Panc1 (cell line): ENCODE measurements at regions of chr13 and their contacts with region 1.

Region 1: GRCh38 chr13:60392131-60392530 is 4.9 kb upstream of the TDRD3 start:
- DNase-seq: no peak
- ATAC-seq: no peak
- H3K4me3 ChIP-seq: no peak overlapping the region
- H3K27ac ChIP-seq: no peak overlapping the region
- H3K4me1 ChIP-seq: peaks cover 5% of the 10 kb centered on the region; the same call in 1 of the 2 replicates
- H3K27me3 ChIP-seq: no peaks in the 10 kb centered on the region
- CTCF ChIP-seq: no peak

Region 2: GRCh38 chr13:59710991-59711701 is 681.0 kb before region 1 on chr13:
- CTCF ChIA-PET with region 1: no interaction called
- POLR2A ChIA-PET with region 1: no interaction called
- in situ Hi-C with region 1: no loop called
- intact Hi-C with region 1: no loop called
- DNase-seq: no peak
- ATAC-seq: no peak
- H3K4me3 ChIP-seq: no peak overlapping the region
- H3K27ac ChIP-seq: no peak overlapping the region
- H3K4me1 ChIP-seq: no peaks in the 10 kb centered on the region
- H3K27me3 ChIP-seq: no peaks in the 10 kb centered on the region
- CTCF ChIP-seq: no peak

Region 3: DNA sequence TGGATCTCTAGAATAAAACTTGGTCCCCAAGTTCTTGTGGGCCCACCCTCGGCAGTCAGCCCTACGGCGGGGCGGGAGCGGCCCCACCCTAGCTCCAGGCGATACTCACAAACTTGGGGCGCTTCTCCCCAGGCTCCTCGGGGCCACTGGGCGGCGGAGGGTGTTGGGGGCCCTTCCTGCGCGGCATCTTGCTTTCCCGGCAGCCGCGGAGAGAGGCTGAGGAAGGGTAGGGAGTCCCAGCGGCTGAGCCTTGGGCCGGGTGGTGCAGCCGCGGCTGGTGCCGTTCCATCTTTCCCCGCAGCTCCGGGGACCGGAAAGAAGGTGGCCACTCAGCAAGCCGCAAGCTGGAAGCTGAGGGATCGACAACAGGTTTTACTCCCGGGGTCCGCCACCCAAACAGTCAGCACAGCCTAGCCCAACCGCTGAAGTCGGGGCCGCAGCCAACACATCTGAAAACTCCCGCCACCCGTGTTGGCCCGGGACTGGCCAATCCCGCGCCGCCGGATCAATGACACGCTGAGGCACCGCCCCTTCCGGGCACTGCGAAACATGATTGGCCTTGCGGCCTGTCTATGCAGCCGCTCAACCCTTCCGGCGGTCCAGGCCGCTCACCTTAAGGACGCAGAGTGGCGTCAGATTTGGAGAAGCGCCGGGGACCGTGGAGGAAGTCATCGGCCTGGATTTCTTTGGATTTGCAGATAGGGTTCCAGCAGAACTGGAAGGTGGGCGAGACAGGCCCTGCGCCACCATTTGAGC is 228.5 kb before region 1 on chr13 and contains the start of gene DIAPH3:
- CTCF ChIA-PET with region 1: no interaction called
- POLR2A ChIA-PET with region 1: interaction called, 21 read pairs
- in situ Hi-C with region 1: no loop called
- intact Hi-C with region 1: no loop called
- DNase-seq: peak; percentile 50
- ATAC-seq: peak; percentile 100
- H3K4me3 ChIP-seq: peak within 1 kb of the TSS; percentile 88 to 95
- H3K27ac ChIP-seq: peak within 1 kb of the TSS; percentile 96
- H3K4me1 ChIP-seq: peaks cover 5% of the 10 kb centered on the region
- H3K27me3 ChIP-seq: no peaks in the 10 kb centered on the region
- CTCF ChIP-seq: no peak
- total RNA-seq, gene DIAPH3: 15.4 TPM

Region 4: DNA sequence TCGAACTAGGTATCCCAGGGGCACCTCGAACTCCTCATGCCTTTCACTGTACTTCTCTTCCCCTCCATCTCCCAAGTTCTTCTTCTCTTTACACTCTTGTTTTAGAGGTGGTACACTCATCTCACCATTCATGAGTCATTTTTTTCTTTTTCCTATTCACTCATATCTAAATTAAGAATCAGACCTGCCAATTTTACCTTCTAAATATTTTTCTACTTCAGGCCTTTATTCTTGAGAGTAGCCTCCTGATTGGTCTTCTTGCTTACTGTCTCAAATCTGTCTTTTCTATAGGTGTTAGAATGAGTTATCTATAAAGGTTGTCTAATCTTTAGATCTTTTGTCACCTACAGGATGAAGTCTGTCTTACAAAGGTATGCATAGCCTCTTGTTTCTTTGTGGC is 25.6 kb after region 1 on chr13:
- CTCF ChIA-PET with region 1: no interaction called
- POLR2A ChIA-PET with region 1: interaction called, 11 read pairs
- in situ Hi-C with region 1: no loop called
- intact Hi-C with region 1: no loop called
- DNase-seq: no peak
- ATAC-seq: no peak
- H3K4me3 ChIP-seq: no peak overlapping the region
- H3K27ac ChIP-seq: no peak overlapping the region
- H3K4me1 ChIP-seq: no peaks in the 10 kb centered on the region; the same call in 1 of the 2 replicates
- H3K27me3 ChIP-seq: no peaks in the 10 kb centered on the region
- CTCF ChIP-seq: no peak